Activated T-helper 1 cell treated with anti-CD3 and anti-CD28 coated beads, Interleukin-12 subunit alpha, Interleukin-12 subunit beta, Interleukin-2, Interleukin-4 antibody, amounts not matched to agents 30 ng/mL and 10 ng/mL and 1 ng/mL, durations not matched to agents 14 hours and 24 hours and 36 hours (primary cell): ENCODE measurements at regions of chr20 and their contacts with region 1.

Region 1: DNA sequence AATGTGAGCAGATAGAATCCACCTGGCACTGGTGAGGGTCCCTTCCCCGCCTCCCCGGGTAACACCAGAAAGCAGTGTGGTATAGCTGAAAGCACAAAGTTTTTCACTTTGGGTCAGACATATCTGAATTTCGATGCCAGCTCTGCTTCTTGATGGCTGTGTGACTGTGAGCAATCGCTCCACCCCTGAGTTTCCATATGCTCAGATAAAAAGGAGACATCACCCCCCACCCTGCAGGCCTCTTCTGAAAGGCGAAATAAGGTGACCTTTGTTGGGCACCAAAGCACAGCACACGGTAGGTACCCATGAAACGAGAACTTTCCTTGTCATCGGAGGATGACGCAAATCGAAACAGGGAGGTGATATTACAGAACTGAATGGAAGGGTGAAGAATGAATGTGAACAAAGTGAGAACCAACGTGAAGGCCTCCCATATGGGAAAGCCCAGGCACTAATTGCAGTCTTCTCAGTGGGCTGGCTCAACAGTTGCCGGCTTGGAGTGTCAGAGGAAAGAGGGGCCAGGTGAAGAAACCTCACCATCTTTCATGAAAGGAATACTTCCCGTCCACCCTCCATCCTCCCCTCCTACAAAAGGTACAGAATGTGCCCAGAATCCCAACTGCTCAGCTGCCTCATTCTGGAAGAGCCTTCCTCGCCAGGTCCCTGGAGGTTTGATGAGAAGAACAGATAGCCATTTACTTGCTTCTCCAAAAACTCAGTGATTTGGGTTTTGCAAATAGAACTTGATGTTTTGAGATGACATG is 61.8 kb downstream of the NFATC2 start:
- DNase-seq: peak; percentile 52
- H3K4me3 Mint-ChIP-seq: peak overlapping the region; percentile 61
- H3K27ac Mint-ChIP-seq: peak overlapping the region; percentile 84
- H3K4me1 Mint-ChIP-seq: peaks cover 94% of the 10 kb centered on the region
- H3K27me3 Mint-ChIP-seq: no peaks in the 10 kb centered on the region

Region 2: DNA sequence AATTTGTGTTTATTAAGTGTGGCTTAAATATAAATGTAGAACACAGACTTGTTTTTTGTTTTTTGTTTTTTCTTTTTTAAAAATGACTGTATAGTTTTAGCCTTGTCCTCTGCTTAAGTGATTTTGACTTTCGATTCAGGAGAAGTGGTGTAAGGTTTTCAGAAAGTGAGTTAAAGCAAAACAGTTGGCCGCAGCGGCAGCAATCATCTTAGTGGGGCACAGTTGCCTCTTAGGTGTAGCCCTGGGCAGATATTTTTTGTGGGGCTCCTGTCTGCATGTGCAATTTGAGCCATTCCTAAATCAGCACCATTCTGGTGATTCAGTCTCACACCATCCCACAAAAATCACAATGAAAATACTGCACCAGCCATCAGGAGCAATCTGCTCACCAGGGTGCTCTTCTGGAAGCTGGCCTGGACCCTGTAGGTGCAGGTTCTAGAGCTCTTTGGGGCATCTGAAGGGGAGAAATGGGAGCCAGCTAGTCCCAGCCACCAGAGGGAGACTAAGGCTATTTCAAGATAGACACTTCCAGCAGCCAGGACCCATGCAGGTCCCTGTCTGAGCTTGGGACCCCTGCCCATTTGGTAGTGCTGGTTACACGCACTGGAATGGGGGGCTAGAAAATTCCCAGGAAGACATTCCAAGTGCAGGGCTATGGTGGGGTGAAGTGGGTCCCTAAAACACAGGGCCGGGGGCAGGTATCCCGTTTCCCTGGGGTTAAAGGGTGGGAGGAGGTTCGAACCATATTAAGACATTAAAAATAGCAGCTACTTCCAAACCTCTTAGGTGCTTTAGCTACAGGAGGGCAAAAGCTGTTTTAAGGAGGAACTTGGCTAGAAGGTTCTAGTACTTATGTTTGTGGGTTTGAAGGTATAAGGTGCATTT is 94.8 kb before region 1 on chr20:
- intact Hi-C with region 1: loop called (anchors 1 kb)
- DNase-seq: no peak
- H3K4me3 Mint-ChIP-seq: peak overlapping the region; percentile 50
- H3K27ac Mint-ChIP-seq: no peak overlapping the region
- H3K4me1 Mint-ChIP-seq: peaks cover 78% of the 10 kb centered on the region
- H3K27me3 Mint-ChIP-seq: no peaks in the 10 kb centered on the region

Region 3: GRCh38 chr20:51456511-51457509 is 23.9 kb before region 1 on chr20:
- intact Hi-C with region 1: no loop called
- DNase-seq: no peak
- H3K4me3 Mint-ChIP-seq: no peak overlapping the region
- H3K27ac Mint-ChIP-seq: peak overlapping the region; percentile 44
- H3K4me1 Mint-ChIP-seq: peaks cover 37% of the 10 kb centered on the region
- H3K27me3 Mint-ChIP-seq: no peaks in the 10 kb centered on the region

Region 4: DNA sequence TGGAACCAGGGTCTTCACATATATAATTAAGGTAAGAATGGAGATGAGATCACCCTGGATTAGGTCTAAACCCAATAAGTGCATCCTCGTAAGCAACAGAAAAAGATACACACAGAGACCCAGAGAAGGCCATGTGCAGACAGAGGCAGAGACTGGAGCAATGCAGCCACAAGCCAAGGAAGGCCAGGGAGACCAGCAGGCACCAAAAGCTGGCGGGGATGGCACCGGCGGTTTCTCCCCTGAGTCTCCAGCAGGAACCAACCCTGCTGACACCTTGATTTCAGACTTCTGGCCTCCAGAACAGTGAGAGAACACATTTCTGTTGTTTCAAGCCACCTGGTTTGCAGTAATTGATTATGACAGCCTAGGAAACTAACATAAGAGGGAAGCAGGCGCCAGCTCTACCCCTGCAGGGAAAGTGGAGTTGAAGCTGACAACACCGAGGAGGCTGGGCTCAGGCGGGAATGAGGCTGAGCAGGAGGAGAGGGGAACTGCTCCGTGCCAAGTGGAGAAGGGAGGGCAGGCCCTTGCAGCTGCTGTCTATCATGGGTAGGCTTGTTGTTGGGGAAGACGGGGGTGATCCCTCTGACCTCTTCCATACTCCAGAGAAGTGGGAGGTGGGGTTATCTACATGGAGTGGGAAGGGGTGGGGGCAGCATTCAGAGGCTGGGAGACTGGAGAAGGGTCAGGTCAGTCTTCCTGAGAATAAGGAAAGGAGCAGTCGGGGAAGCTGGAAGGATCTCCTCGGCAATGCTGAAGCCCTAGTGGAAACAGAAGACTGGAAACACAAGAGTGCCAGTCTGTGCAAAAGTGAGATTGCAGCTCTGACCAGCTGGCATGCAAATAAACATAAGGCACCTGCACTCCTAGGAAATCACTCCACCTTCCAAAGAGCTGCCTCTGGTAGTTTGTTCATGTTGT is 10.9 kb before region 1 on chr20:
- intact Hi-C with region 1: loop called (anchors 1 kb)
- DNase-seq: no peak
- H3K4me3 Mint-ChIP-seq: no peak overlapping the region
- H3K27ac Mint-ChIP-seq: peak overlapping the region; percentile 83
- H3K4me1 Mint-ChIP-seq: peaks cover 63% of the 10 kb centered on the region
- H3K27me3 Mint-ChIP-seq: no peaks in the 10 kb centered on the region

Region 5: GRCh38 chr20:51531141-51531710 is 50.5 kb after region 1 on chr20:
- intact Hi-C with region 1: loop called (anchors 1 kb)
- DNase-seq: peak; percentile 58
- H3K4me3 Mint-ChIP-seq: peak overlapping the region; percentile 84
- H3K27ac Mint-ChIP-seq: peak overlapping the region; percentile 99
- H3K4me1 Mint-ChIP-seq: peaks cover 92% of the 10 kb centered on the region
- H3K27me3 Mint-ChIP-seq: no peaks in the 10 kb centered on the region

Region 6: GRCh38 chr20:51624157-51624731 is 143.6 kb after region 1 on chr20:
- intact Hi-C with region 1: no loop called
- DNase-seq: peak; percentile 31
- H3K4me3 Mint-ChIP-seq: no peak overlapping the region
- H3K27ac Mint-ChIP-seq: no peak overlapping the region
- H3K4me1 Mint-ChIP-seq: peaks cover 19% of the 10 kb centered on the region
- H3K27me3 Mint-ChIP-seq: peaks cover 2% of the 10 kb centered on the region

Region 7: GRCh38 chr20:51661609-51662178 is 181.0 kb after region 1 on chr20:
- intact Hi-C with region 1: loop called (anchors 1 kb)
- DNase-seq: peak; percentile 20
- H3K4me3 Mint-ChIP-seq: peak overlapping the region; percentile 5
- H3K27ac Mint-ChIP-seq: peak overlapping the region; percentile 58
- H3K4me1 Mint-ChIP-seq: peaks cover 24% of the 10 kb centered on the region
- H3K27me3 Mint-ChIP-seq: no peaks in the 10 kb centered on the region